Right ventricle myocardium inferior (tissue), 1 donor: ENCODE measurements at regions of chr2 and their contacts with region 1.

Region 1: DNA sequence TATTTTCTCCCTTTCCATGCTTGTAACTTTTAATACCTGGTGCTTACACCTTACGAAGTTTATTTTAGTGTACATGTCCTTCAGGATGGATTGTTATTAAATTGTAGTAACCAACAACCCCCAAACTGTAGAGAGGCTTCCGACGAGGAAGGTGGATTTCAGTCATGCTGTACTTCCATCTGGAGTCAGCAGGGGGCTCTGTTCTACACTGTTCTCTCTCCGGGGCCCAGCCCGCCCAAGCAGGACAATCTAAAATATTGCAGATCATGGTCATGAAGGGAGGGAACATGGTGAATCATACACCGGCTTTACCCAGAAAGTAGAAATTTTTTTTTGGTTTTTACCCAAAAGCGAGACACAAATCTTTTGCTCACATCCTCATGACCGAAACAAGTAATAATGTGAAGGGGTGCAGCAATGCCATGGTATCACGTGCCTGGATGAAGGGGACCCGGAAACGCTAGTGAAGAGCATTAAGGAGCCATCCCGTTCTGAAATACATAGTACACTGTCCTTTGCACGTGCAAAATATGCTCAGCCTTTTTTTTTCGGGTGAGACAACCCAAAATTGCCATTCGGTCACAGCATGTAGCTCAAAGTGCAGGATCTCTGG is 884.8 kb downstream of the EPHA4 start:
- DNase-seq: peak; percentile 75
- ATAC-seq: peak; percentile 82

Region 2: DNA sequence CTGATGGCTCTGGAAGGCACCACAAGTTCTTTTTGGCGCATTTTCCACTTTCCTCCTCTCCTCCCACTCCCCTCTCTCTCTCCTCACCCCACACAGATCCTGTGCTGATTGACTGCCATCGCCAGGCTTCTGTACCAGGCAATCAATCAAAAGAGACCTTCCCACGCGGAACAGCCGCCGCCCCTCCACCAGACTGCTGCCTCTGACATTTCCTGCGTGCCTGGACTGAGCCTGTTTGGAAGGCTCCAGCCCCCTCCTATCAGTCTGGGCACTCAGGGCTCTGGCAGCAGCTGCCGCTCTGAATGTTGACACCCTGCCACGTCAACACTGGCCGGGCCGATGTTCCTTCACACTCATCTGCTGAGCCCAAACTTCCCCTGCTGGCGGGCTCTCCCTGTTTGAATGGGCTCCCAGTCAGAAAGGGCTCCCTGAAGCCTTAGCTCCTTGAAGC is 417.0 kb after region 1 on chr2:
- intact Hi-C with region 1: loop called (anchors 2 kb)
- DNase-seq: peak; percentile 92
- ATAC-seq: peak; percentile 98